ENCODE measurements at regions of chrX and their contacts with region 1.

Region 1: DNA sequence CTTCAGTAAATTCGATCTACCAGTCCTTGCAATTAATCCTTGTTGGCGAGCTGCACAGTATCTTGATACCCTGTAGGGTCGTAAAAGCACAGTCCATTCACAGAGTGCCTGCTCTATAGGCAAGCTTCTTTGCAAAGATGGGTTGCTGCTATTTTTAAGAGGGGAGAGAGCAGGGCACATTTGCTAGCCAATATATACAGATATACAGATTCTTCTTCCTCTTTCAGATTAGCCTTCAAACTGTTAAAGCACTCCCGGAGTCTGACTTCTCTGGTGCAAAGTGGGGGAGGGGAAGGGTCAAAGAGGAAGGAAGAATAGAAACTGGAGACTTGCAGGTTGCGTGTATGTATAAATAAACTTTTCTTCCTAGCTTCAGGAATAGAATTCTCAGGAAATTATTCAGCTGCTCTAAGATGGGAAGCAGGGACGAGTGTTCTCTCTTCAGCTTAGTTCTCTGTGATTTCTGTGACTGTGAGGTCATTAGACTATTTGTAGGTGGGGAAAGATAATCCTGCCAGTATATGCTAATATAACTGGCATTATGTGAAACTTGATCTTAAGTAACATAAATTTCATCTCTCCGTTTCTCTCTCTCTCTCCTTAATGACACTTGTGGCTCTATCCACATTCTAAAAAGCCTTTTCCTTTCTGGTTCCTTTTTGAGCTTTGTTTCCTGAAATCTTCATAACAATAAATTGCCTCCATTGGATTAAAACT is at the start of gene CYSLTR1:
- DNase-seq: no peak
- H3K4me3 Mint-ChIP-seq: peak within 1 kb of the TSS; percentile 71
- H3K27ac Mint-ChIP-seq: peak within 1 kb of the TSS; percentile 85
- H3K4me1 Mint-ChIP-seq: peaks cover 58% of the 10 kb centered on the region
- H3K27me3 Mint-ChIP-seq: no peaks in the 10 kb centered on the region
- total RNA-seq, gene CYSLTR1: 2.1 to 2.2 TPM

Region 2: GRCh38 chrX:77003956-77004355 is 1323.6 kb before region 1 on chrX:
- CTCF ChIA-PET with region 1: no interaction called
- intact Hi-C with region 1: loop called (anchors 2 kb)
- DNase-seq: peak; percentile 72
- H3K4me3 Mint-ChIP-seq: no peak overlapping the region
- H3K27ac Mint-ChIP-seq: peak overlapping the region; percentile 75
- H3K4me1 Mint-ChIP-seq: peaks cover 16% of the 10 kb centered on the region
- H3K27me3 Mint-ChIP-seq: peaks cover 3% of the 10 kb centered on the region

Region 3: DNA sequence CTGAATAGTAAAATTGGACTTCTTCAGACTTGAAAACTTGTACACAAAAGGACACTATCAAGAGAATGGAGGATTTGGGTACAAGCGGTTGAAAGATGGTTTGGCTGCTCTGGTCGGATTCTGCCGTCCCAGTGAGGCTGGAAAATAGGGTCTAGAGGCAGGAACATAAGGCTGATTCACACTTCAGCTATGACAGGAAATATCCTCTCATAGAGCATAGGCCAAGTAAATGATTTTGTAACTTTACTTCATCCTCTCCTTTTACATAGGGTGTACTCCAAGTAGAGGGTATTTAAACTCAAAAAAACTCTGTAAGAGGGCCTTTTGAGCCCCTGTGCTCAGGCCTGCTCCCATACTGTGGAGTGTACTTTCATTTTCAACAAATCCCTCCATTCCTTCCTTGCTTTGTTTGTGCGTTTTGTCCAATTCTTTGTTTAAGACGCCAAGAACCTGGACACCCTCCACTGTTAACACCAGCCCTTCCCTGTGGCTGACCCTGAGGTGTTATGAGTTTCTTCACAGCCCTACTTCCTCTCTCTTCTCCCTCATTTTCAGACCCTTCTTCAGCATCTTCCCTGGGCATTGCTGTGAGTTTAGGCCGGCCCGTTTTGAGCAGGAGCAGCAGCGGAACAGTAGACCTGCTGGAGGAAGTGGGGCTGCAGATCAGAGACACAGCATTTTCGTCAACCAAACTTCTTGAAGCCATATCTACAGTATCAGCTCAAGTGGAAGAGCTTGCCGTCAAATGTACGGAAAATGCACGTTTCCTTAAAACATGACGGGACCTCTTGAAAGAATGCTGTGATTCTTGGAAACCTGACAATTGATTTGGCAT is 365.2 kb before region 1 on chrX:
- CTCF ChIA-PET with region 1: no interaction called
- intact Hi-C with region 1: loop called (anchors 1 kb)
- DNase-seq: peak; percentile 14
- H3K4me3 Mint-ChIP-seq: peak overlapping the region; percentile 75
- H3K27ac Mint-ChIP-seq: peak overlapping the region; percentile 93
- H3K4me1 Mint-ChIP-seq: peaks cover 44% of the 10 kb centered on the region
- H3K27me3 Mint-ChIP-seq: no peaks in the 10 kb centered on the region

Region 4: GRCh38 chrX:78139160-78140123 is 188.1 kb before region 1 on chrX and contains the start of gene TAF9B:
- CTCF ChIA-PET with region 1: no interaction called
- intact Hi-C with region 1: loop called (anchors 2 kb)
- DNase-seq: peak; percentile 89
- H3K4me3 Mint-ChIP-seq: peak within 1 kb of the TSS; percentile 89
- H3K27ac Mint-ChIP-seq: peak within 1 kb of the TSS; percentile 90
- H3K4me1 Mint-ChIP-seq: peaks cover 4% of the 10 kb centered on the region
- H3K27me3 Mint-ChIP-seq: no peaks in the 10 kb centered on the region
- total RNA-seq, gene TAF9B: 25.9 to 27.2 TPM

Region 5: GRCh38 chrX:78314571-78314970 is 13.0 kb before region 1 on chrX:
- CTCF ChIA-PET with region 1: no interaction called
- intact Hi-C with region 1: loop called (anchors 1 kb)
- DNase-seq: peak; percentile 42
- H3K4me3 Mint-ChIP-seq: no peak overlapping the region
- H3K27ac Mint-ChIP-seq: peak overlapping the region; percentile 26
- H3K4me1 Mint-ChIP-seq: peaks cover 62% of the 10 kb centered on the region
- H3K27me3 Mint-ChIP-seq: no peaks in the 10 kb centered on the region

Region 6: GRCh38 chrX:79167462-79167861 is 839.9 kb after region 1 on chrX:
- CTCF ChIA-PET with region 1: interaction called, 3 read pairs
- intact Hi-C with region 1: loop called (anchors 5 kb)
- DNase-seq: no peak
- H3K4me3 Mint-ChIP-seq: peak overlapping the region; percentile 63
- H3K27ac Mint-ChIP-seq: peak overlapping the region; percentile 92
- H3K4me1 Mint-ChIP-seq: peaks cover 74% of the 10 kb centered on the region
- H3K27me3 Mint-ChIP-seq: no peaks in the 10 kb centered on the region

Region 7: DNA sequence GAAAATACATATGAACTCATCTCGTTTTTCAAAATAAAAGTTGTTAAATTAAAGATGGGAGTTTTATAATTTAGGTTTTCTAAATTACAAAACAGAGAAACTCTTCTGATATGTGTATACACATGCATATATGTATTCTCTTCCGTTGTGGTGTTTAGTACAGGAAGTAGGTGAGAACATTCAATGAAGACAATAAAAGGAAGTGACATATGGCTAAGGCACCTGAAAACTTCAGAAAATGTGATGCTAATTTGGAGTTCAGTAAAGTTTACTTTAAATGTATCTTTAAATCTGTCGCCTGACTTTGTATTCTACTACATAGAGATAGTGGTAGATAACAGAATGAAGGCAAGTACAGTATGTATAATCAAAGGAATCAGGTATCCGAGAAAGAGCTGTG is 1073.1 kb after region 1 on chrX:
- CTCF ChIA-PET with region 1: no interaction called
- intact Hi-C with region 1: loop called (anchors 5 kb)
- DNase-seq: no peak
- H3K4me3 Mint-ChIP-seq: no peak overlapping the region
- H3K27ac Mint-ChIP-seq: no peak overlapping the region
- H3K4me1 Mint-ChIP-seq: peaks cover 19% of the 10 kb centered on the region
- H3K27me3 Mint-ChIP-seq: no peaks in the 10 kb centered on the region

Measured in activated naive CD4-positive, alpha-beta T cell treated with anti-CD3 and anti-CD28 coated beads for 36 hours (primary cell).